ENCODE measurements at regions of chr17 and their contacts with region 1.

Region 1: GRCh38 chr17:16589097-16589969 is 20.3 kb upstream of the ZNF287 start:
- DNase-seq: peak; percentile 91
- H3K4me3 ChIP-seq: peak overlapping the region; percentile 47
- H3K27ac ChIP-seq: no peak overlapping the region
- H3K4me1 ChIP-seq: no peaks in the 10 kb centered on the region
- H3K27me3 ChIP-seq: no peaks in the 10 kb centered on the region
- CTCF ChIP-seq: peak; percentile 97

Region 2: DNA sequence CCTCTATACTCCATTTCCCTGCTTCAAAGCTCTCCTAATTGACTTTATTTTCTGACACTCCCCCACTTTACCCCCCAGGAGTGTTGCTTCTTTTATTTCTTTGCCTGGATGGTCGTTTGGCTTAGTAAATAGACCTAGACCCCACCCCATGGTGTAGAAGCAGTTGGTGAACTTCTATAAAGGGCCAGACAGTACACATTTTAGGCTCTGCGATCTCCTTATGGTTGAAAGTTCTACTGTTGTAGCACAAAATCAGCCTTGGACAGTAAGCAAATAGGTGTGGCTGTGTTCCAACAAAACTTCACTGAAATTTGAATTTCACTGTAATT is 52.2 kb before region 1 on chr17:
- intact Hi-C with region 1: loop called (anchors 2 kb)
- DNase-seq: no peak
- H3K4me3 ChIP-seq: no peak overlapping the region
- H3K27ac ChIP-seq: peak overlapping the region; percentile 93
- H3K4me1 ChIP-seq: no peaks in the 10 kb centered on the region
- H3K27me3 ChIP-seq: no peaks in the 10 kb centered on the region
- CTCF ChIP-seq: no peak

Region 3: DNA sequence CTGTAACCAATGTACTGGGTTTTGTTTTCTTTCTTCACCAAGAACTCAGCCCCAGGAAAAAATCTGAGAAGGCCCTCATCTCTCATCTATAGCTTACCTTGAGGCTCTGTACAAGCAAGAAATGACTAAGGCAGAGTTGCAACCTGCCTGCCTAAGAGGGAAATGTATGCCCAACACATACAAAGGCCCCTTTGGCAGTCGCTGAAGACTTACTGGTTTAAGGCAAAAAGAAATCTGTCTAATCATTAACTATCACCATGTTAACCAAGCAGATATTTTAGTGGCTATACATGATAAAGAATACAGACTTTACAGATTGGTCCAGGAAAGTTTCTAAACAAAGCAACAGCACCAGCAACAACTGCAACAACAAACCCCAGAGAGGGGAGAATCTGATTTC is 50.1 kb after region 1 on chr17:
- intact Hi-C with region 1: no loop called
- DNase-seq: no peak
- H3K4me3 ChIP-seq: no peak overlapping the region
- H3K27ac ChIP-seq: no peak overlapping the region
- H3K4me1 ChIP-seq: no peaks in the 10 kb centered on the region
- H3K27me3 ChIP-seq: no peaks in the 10 kb centered on the region
- CTCF ChIP-seq: no peak

Measured in colonic mucosa (tissue), 4 donors.